ENCODE measurements at regions of chr4 and their contacts with region 1.

Region 1: GRCh38 chr4:25981749-25982148 is 67.7 kb downstream of the SMIM20 start:
- DNase-seq: no peak
- ATAC-seq: no peak
- H3K4me3 ChIP-seq: no peak overlapping the region
- H3K27ac ChIP-seq: no peak overlapping the region
- H3K4me1 ChIP-seq: peaks cover 5% of the 10 kb centered on the region
- H3K27me3 ChIP-seq: no peaks in the 10 kb centered on the region
- CTCF ChIP-seq: no peak
- EP300 ChIP-seq: no peak
- POLR2A ChIP-seq: no peak
- RAD21 ChIP-seq: no peak

Region 2: GRCh38 chr4:25970226-25970675 is 11.5 kb before region 1 on chr4:
- CTCF ChIA-PET with region 1: interaction called, 10 read pairs
- POLR2A ChIA-PET with region 1: interaction called, 4 read pairs
- RAD21 ChIA-PET with region 1: interaction called, 3 read pairs
- SMC1A ChIA-PET with region 1: no interaction called
- in situ Hi-C with region 1: no loop called
- intact Hi-C with region 1: no loop called
- DNase-seq: no peak
- ATAC-seq: peak; percentile 81
- H3K4me3 ChIP-seq: no peak overlapping the region
- H3K27ac ChIP-seq: no peak overlapping the region
- H3K4me1 ChIP-seq: peaks cover 14% of the 10 kb centered on the region
- H3K27me3 ChIP-seq: no peaks in the 10 kb centered on the region
- CTCF ChIP-seq: no peak
- EP300 ChIP-seq: no peak
- POLR2A ChIP-seq: no peak
- RAD21 ChIP-seq: no peak